Head of caudate nucleus (tissue), 42 donors: ENCODE measurements at regions of chr2 and their contacts with region 1.

Region 1: DNA sequence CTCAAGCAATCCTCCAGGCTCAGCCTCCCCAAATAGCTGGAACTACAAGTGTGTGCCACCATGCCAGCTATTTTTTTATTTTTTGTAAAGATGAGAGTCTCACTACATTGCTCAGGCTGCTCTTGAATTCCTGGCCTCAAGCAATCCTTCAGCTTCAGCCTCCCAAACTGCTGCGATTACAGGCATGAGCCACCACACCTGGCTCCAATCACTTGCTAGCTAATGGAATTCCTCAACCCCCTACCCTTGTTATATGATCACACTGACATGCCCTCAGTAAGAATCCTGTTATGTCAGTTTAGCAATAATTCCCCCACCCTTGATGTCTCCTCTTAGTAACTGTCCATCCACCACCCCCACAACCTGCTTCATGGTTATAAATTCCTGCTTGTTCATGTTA is 12.3 kb downstream of the CHN1 start:
- DNase-seq: no peak

Region 2: GRCh38 chr2:174771631-174772471 is 221.0 kb before region 1 on chr2:
- intact Hi-C with region 1: loop called (anchors 5 kb)
- DNase-seq: peak; percentile 58 to 91 (median 80)